Activated T-helper 1 cell treated with anti-CD3 and anti-CD28 coated beads, Interleukin-12 subunit alpha, Interleukin-12 subunit beta, Interleukin-2, Interleukin-4 antibody, amounts not matched to agents 30 ng/mL and 10 ng/mL and 1 ng/mL, durations not matched to agents 14 hours and 24 hours and 36 hours (primary cell): ENCODE measurements at regions of chr3 and their contacts with region 1.

Region 1: DNA sequence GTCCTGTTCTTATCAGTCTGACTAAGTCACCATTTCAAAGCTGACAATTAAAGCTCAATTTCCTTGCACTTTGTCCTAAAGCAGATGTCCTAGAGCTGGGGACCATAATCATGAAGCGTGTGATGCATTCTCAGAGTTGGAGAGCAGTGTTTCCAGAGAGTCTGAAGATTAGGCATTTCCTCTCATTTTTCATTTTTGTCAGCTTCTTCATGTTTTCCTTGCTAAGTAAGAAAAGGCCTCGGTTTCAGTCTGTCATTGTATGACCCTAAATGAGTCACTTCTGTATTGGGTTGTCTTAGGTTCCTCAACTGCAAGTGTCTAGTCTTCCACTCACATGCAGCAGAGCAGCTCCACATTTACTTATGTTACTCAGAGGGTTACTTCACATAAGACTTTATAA is 257.2 kb upstream of the TPRG1 start:
- DNase-seq: no peak
- H3K4me3 Mint-ChIP-seq: peak overlapping the region; percentile 34
- H3K27ac Mint-ChIP-seq: peak overlapping the region; percentile 88
- H3K4me1 Mint-ChIP-seq: peaks cover 46% of the 10 kb centered on the region
- H3K27me3 Mint-ChIP-seq: no peaks in the 10 kb centered on the region

Region 2: GRCh38 chr3:187738331-187739093 is 1176.0 kb before region 1 on chr3:
- intact Hi-C with region 1: loop called (anchors 2 kb)
- DNase-seq: peak; percentile 67
- H3K4me3 Mint-ChIP-seq: peak overlapping the region; percentile 96
- H3K27ac Mint-ChIP-seq: peak overlapping the region; percentile 92
- H3K4me1 Mint-ChIP-seq: peaks cover 71% of the 10 kb centered on the region
- H3K27me3 Mint-ChIP-seq: no peaks in the 10 kb centered on the region

Region 3: DNA sequence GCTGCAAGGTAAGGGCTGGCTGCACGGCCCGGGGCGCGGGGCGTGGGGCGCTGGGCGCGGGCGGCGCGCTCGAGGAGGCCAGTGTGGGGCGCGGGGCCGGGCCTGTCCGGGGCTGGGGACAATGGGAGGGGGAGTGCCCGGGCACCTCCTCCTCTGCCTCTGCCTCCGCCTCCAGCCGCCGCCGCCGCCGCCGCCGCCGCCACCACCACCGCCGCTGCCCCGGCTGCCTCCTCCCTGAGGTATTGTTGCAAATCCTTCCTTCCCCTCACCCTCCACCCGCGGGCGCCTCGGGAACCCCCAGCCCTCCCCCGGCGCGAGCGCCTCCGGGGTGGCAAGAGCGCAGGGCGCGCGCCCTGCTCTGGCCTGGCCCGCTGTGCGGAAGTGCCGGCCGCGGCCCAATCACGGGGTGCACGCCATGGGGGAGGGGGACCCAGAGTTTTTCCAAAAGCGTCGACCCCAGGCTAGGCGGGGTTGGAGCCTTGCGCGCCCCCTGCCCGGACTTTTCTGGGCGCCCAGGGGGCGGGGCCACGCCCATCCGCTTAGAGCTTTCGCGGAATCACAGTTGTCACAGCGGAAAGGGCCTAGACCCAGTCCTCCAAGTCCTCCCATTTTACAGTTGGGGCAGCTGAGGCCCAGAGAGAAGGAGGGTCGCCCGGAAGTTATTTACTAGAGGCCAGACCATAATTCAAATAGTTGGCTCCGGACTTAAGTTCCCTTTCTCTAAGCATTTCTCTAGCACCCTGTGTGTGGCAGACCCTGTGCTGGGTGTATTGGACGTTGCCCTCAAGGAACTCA is 760.3 kb before region 1 on chr3 and contains the start of gene LPP:
- intact Hi-C with region 1: loop called (anchors 5 kb)
- DNase-seq: peak; percentile 90
- H3K4me3 Mint-ChIP-seq: peak within 1 kb of the TSS; percentile 89
- H3K27ac Mint-ChIP-seq: peak within 1 kb of the TSS; percentile 87
- H3K4me1 Mint-ChIP-seq: peaks cover 71% of the 10 kb centered on the region
- H3K27me3 Mint-ChIP-seq: no peaks in the 10 kb centered on the region
- total RNA-seq, gene LPP: 38.2 and 46.4 TPM in 2 replicates

Region 4: DNA sequence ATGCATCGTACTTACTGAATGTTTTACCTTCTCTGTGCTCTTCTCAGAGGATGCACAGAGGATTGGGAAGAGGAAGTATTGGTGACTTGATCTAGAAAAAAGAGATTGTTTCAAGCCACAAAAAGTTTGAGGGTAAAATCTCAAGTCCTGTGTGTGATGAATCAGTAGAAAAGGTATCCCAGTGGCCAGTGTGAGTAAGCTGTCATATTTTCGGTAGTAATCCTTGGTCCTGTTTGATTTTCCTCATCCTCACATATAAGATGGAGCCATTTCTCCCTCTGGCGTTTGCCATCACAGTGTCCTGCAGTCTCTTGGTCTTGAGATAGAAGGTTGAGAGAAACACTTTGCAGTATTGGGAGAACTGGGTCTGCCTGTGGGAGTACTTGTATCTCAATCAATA is 593.8 kb before region 1 on chr3:
- intact Hi-C with region 1: loop called (anchors 5 kb)
- DNase-seq: no peak
- H3K4me3 Mint-ChIP-seq: no peak overlapping the region
- H3K27ac Mint-ChIP-seq: no peak overlapping the region
- H3K4me1 Mint-ChIP-seq: peaks cover 49% of the 10 kb centered on the region
- H3K27me3 Mint-ChIP-seq: peaks cover 1% of the 10 kb centered on the region

Region 5: GRCh38 chr3:188697127-188697526 is 217.4 kb before region 1 on chr3:
- intact Hi-C with region 1: loop called (anchors 1 kb)
- DNase-seq: no peak
- H3K4me3 Mint-ChIP-seq: no peak overlapping the region
- H3K27ac Mint-ChIP-seq: peak overlapping the region; percentile 18
- H3K4me1 Mint-ChIP-seq: peaks cover 36% of the 10 kb centered on the region
- H3K27me3 Mint-ChIP-seq: peaks cover 5% of the 10 kb centered on the region

Region 6: DNA sequence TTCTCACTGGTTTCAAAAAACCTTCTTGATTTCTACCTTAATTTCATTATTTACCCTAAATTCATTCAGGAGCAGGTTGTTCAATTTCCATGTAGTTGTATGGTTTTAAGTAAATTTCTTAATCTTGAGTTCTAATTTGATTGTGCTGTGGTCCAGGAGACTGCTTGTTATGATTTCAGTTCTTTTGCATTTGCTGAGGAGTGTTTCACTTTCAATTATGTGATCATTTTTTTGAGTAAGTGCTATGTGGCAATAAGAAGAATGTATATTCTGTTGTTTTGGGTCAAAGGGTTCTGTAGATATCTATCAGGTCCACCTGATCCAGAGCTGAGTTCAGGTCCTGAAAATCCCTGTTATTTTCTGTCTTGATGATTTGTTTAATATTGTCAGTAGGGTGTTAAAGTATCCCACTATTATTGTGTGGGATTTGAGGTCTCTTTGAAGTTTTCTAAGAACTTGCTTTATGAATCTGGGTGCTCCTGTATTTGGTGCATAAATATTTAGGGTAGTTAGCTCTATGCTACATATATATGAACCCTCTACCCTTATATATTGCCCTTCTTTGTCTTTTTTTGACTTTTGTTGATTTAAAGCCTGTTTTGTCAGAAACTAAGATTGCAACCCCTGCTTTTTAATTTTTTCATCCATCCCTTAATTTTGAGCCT is 98.8 kb after region 1 on chr3:
- intact Hi-C with region 1: loop called (anchors 1 kb)
- DNase-seq: no peak
- H3K4me3 Mint-ChIP-seq: no peak overlapping the region
- H3K27ac Mint-ChIP-seq: peak overlapping the region; percentile 27
- H3K4me1 Mint-ChIP-seq: peaks cover 22% of the 10 kb centered on the region
- H3K27me3 Mint-ChIP-seq: peaks cover 23% of the 10 kb centered on the region